HCT116 (cell line): ENCODE measurements at regions of chr4 and their contacts with region 1.

Region 1: GRCh38 chr4:84503495-84504437 is 4.7 kb upstream of the NKX6-1 start:
- DNase-seq: peak; percentile 62
- ATAC-seq: peak; percentile 64
- H3K4me3 ChIP-seq: no peak overlapping the region
- H3K27ac ChIP-seq: no peak overlapping the region
- H3K4me1 ChIP-seq: peaks cover 0 to 6% of the 10 kb centered on the region in 2 experiments; a peak in 1 of 4 replicates
- H3K27me3 ChIP-seq: no peaks in the 10 kb centered on the region
- CTCF ChIP-seq: peak; percentile 70 to 77 (median 74); a peak in 5 of 6 replicates
- POLR2A ChIP-seq: no peak
- RAD21 ChIP-seq: peak; percentile 90

Region 2: GRCh38 chr4:82774711-82775171 is 1729.0 kb before region 1 on chr4:
- CTCF ChIA-PET with region 1: no interaction called
- POLR2A ChIA-PET with region 1: no interaction called
- RAD21 ChIA-PET with region 1: no interaction called
- intact Hi-C with region 1: no loop called
- DNase-seq: no peak
- ATAC-seq: no peak
- H3K4me3 ChIP-seq: no peak overlapping the region
- H3K27ac ChIP-seq: no peak overlapping the region
- H3K4me1 ChIP-seq: peaks cover 13 to 20% of the 10 kb centered on the region in 2 experiments; a peak in 3 of 4 replicates
- H3K27me3 ChIP-seq: no peaks in the 10 kb centered on the region
- CTCF ChIP-seq: no peak
- POLR2A ChIP-seq: no peak
- RAD21 ChIP-seq: no peak

Region 3: GRCh38 chr4:83174844-83175414 is 1328.8 kb before region 1 on chr4:
- CTCF ChIA-PET with region 1: no interaction called
- POLR2A ChIA-PET with region 1: no interaction called
- RAD21 ChIA-PET with region 1: no interaction called
- intact Hi-C with region 1: no loop called
- DNase-seq: no peak
- ATAC-seq: no peak
- H3K4me3 ChIP-seq: no peak overlapping the region
- H3K27ac ChIP-seq: no peak overlapping the region
- H3K4me1 ChIP-seq: peaks cover 4 to 7% of the 10 kb centered on the region in 2 experiments; a peak in 2 of 4 replicates
- H3K27me3 ChIP-seq: no peaks in the 10 kb centered on the region
- CTCF ChIP-seq: no peak
- POLR2A ChIP-seq: no peak
- RAD21 ChIP-seq: no peak

Region 4: GRCh38 chr4:83516042-83516772 is 987.6 kb before region 1 on chr4:
- CTCF ChIA-PET with region 1: no interaction called
- POLR2A ChIA-PET with region 1: no interaction called
- RAD21 ChIA-PET with region 1: no interaction called
- intact Hi-C with region 1: no loop called
- DNase-seq: no peak
- ATAC-seq: no peak
- H3K4me3 ChIP-seq: no peak overlapping the region
- H3K27ac ChIP-seq: no peak overlapping the region
- H3K4me1 ChIP-seq: no peaks in the 10 kb centered on the region
- H3K27me3 ChIP-seq: no peaks in the 10 kb centered on the region
- CTCF ChIP-seq: no peak
- POLR2A ChIP-seq: no peak
- RAD21 ChIP-seq: no peak

Region 5: DNA sequence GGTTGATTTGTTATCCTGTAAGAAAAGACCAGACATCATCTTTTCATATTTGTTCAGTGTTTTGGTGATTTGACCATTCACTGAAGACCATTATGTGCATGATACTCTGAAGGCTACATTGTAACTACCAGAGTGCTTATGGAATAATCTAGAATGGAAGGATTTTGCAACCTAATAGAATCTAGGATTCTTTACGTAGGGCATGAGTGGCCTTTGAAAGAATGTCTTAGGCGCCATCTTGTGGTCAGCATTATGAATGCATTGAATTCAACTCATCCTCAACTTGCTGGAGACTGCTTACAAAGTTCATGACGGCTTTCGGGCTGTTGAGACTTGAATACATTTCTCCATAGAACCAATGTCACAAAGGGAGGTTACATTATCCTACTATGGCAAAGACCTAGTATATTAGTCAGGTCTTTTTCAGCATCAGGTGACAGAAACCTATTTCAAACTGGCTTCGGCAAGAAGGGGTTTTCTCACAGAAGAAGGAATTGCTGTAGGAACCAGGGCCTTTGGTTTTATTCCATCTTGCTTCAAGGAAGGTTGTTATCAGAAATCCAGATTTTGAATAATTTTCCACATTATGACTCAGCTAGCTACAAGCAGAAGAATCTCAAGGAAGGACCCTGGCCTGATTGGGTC is 863.8 kb before region 1 on chr4:
- CTCF ChIA-PET with region 1: interaction called, 8 read pairs
- POLR2A ChIA-PET with region 1: no interaction called
- RAD21 ChIA-PET with region 1: no interaction called
- intact Hi-C with region 1: loop called (anchors 1 kb)
- DNase-seq: peak; percentile 71
- ATAC-seq: peak; percentile 86
- H3K4me3 ChIP-seq: no peak overlapping the region
- H3K27ac ChIP-seq: no peak overlapping the region
- H3K4me1 ChIP-seq: no peaks in the 10 kb centered on the region
- H3K27me3 ChIP-seq: no peaks in the 10 kb centered on the region
- CTCF ChIP-seq: peak; percentile 68 to 90 (median 85)
- POLR2A ChIP-seq: no peak
- RAD21 ChIP-seq: peak; percentile 96

Region 6: GRCh38 chr4:83905952-83906351 is 597.8 kb before region 1 on chr4:
- CTCF ChIA-PET with region 1: no interaction called
- POLR2A ChIA-PET with region 1: no interaction called
- RAD21 ChIA-PET with region 1: no interaction called
- intact Hi-C with region 1: loop called (anchors 10 kb)
- DNase-seq: no peak
- ATAC-seq: peak; percentile 83
- H3K4me3 ChIP-seq: no peak overlapping the region
- H3K27ac ChIP-seq: no peak overlapping the region
- H3K4me1 ChIP-seq: no peaks in the 10 kb centered on the region
- H3K27me3 ChIP-seq: no peaks in the 10 kb centered on the region
- CTCF ChIP-seq: peak; percentile 27 to 64 (median 60); a peak in 5 of 6 replicates
- POLR2A ChIP-seq: no peak
- RAD21 ChIP-seq: peak; percentile 65

Region 7: DNA sequence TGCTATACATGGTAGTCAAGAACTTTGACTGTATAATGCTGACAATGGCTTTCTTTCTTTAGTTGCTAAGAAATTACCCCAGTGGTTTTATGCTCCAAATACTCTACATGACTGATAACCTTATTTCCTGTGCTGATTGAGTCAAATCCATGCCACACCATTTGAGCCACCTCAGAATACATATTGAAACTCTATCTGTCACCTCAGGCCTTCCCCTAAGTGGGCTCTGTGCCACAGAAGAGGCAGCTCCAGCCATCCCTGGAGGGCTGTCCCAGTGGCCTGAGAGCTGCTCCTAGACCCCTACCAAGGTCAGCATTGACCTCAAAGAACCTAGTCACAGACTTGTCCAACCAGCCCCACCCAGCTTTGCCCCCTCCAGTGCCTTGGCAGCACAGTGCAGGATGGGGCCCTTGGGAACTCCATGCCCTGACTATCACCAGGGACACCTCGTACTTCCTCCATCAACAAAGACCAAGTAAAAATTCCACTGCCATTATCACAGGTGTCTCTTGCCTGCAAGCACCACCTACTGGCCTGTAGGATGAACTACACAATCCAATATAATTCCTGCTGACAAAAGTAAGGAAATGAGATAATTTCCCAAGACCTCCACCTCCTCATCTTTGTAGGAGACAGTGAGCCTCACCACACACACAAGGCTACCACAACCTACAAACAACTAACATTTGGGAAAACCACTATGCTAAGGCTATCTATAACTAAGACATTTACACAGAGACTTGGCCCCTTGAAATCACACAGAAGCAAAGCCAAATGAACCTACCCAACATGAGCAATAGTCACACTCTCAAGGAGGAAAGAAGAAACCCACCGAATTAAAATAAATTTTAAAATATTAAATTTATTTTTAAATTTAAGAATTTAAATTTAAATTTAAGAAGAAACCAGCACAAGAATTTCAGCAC is 244.6 kb before region 1 on chr4:
- CTCF ChIA-PET with region 1: no interaction called
- POLR2A ChIA-PET with region 1: no interaction called
- RAD21 ChIA-PET with region 1: no interaction called
- intact Hi-C with region 1: loop called (anchors 1 kb)
- DNase-seq: peak; percentile 13
- ATAC-seq: peak; percentile 78
- H3K4me3 ChIP-seq: no peak overlapping the region
- H3K27ac ChIP-seq: no peak overlapping the region
- H3K4me1 ChIP-seq: no peaks in the 10 kb centered on the region
- H3K27me3 ChIP-seq: no peaks in the 10 kb centered on the region
- CTCF ChIP-seq: peak; percentile 48 to 82 (median 76); a peak in 5 of 6 replicates
- POLR2A ChIP-seq: no peak
- RAD21 ChIP-seq: peak; percentile 72

Region 8: DNA sequence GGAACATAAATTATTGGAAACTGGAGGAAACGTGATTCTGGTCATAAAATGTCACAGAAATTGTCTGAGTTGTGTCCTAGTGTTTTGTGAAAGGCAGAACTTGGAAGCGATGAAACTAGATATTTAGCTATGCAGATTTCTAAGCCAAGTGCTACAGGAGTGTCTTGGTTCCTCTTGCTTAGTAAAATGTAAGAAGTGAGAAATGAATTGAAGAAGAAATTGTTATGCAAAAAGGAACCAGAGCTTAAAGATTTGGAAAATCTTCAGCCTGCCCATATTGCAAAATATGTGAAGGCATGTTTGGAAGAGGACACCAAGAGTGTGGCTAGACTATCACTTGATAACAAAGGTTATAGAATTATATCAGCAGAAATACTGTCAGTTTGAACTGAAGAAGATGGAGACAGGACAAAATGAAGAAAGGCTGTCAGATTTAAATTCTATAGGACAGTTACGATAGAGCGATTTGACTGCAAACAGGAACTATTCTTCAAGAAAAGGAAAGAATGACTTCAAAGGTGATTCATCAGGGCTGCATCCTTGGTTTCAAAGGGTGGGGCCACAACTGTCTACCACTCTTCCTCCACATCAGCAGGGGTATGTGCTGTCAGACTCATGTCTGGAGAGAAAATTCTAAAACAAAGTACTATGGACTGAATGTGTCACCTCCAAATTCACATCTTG is 69.8 kb after region 1 on chr4:
- CTCF ChIA-PET with region 1: no interaction called
- POLR2A ChIA-PET with region 1: no interaction called
- RAD21 ChIA-PET with region 1: no interaction called
- intact Hi-C with region 1: loop called (anchors 2 kb)
- DNase-seq: no peak
- ATAC-seq: no peak
- H3K4me3 ChIP-seq: no peak overlapping the region
- H3K27ac ChIP-seq: no peak overlapping the region
- H3K4me1 ChIP-seq: peaks cover 0 to 7% of the 10 kb centered on the region in 2 experiments; a peak in 2 of 4 replicates
- H3K27me3 ChIP-seq: no peaks in the 10 kb centered on the region
- CTCF ChIP-seq: no peak
- POLR2A ChIP-seq: no peak
- RAD21 ChIP-seq: no peak

Region 9: GRCh38 chr4:85147439-85148076 is 643.8 kb after region 1 on chr4:
- CTCF ChIA-PET with region 1: no interaction called
- POLR2A ChIA-PET with region 1: no interaction called
- RAD21 ChIA-PET with region 1: no interaction called
- intact Hi-C with region 1: no loop called
- DNase-seq: peak; percentile 69
- ATAC-seq: peak; percentile 93
- H3K4me3 ChIP-seq: no peak overlapping the region; a peak in 1 of 4 replicates
- H3K27ac ChIP-seq: no peak overlapping the region
- H3K4me1 ChIP-seq: no peaks in the 10 kb centered on the region; a peak in 1 of 4 replicates
- H3K27me3 ChIP-seq: no peaks in the 10 kb centered on the region
- CTCF ChIP-seq: peak; percentile 43 to 68 (median 67); a peak in 4 of 6 replicates
- POLR2A ChIP-seq: no peak
- RAD21 ChIP-seq: peak; percentile 83